IMR-90 (cell line): ENCODE measurements at regions of chr5 and their contacts with region 1.

Region 1: GRCh38 chr5:60677844-60678664 is 21.9 kb downstream of the DEPDC1B start:
- DNase-seq: peak; percentile 58
- ATAC-seq: peak; percentile 68
- H3K4me3 ChIP-seq: no peak overlapping the region
- H3K27ac ChIP-seq: peak overlapping the region; percentile 29; the same call in 1 of the 2 replicates
- H3K4me1 ChIP-seq: peaks cover 6% of the 10 kb centered on the region; the same call in 1 of the 2 replicates
- H3K27me3 ChIP-seq: no peaks in the 10 kb centered on the region
- CTCF ChIP-seq: peak; percentile 63
- POLR2A ChIP-seq: no peak
- RAD21 ChIP-seq: peak; percentile 52

Region 2: GRCh38 chr5:60929024-60929423 is 251.0 kb after region 1 on chr5:
- CTCF ChIA-PET with region 1: no interaction called
- POLR2A ChIA-PET with region 1: no interaction called
- dilution Hi-C with region 1: no loop called
- in situ Hi-C with region 1: no loop called
- intact Hi-C with region 1: loop called (anchors 1 kb)
- DNase-seq: peak; percentile 15
- ATAC-seq: no peak
- H3K4me3 ChIP-seq: no peak overlapping the region
- H3K27ac ChIP-seq: no peak overlapping the region
- H3K4me1 ChIP-seq: no peaks in the 10 kb centered on the region
- H3K27me3 ChIP-seq: no peaks in the 10 kb centered on the region
- CTCF ChIP-seq: peak; percentile 41
- POLR2A ChIP-seq: no peak
- RAD21 ChIP-seq: peak; percentile 40

Region 3: DNA sequence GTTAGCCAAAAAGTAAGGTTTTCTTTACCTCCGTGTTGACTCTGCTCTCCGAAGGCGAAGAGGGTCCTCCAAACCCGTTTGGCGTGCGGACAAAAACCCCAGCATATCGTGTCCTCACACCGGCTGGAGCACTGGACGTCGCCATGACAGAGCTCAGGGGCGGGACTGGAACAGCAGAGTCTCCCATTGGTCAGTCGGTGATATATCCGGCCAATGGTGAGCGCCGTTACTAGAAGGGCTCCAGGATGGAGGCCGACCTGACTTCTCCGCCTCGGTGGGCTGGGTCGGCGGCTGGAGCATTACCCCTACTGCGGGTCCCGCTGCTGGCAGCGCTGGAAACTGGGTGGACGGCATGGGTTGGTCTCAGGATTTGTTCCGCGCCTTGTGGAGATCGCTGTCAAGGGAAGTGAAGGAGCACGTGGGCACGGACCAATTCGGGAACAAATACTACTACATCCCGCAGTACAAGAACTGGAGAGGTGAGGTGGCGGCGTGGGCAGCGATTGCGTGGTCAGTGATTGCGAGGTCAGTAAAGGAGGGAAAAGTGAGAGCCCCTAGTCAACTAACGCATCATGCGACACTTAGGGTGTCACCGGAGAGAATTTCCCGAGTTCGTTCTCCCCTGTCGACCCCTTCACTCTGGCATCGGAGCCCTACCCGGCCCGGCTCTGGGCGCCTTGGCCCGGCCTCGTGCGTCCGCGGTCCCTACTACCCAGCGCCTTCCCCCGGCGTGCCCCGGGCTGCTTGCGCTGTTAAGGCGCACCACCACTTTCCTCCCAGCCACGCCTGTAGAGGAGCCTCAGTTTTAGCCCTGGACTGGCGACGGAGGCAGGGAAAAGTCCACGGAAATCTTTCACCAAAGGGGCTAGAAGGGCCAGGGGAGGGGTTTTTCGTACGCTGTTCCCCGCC is 267.1 kb after region 1 on chr5 and contains the starts of genes ERCC8 and NDUFAF2:
- CTCF ChIA-PET with region 1: no interaction called
- POLR2A ChIA-PET with region 1: no interaction called
- dilution Hi-C with region 1: no loop called
- in situ Hi-C with region 1: no loop called
- intact Hi-C with region 1: loop called (anchors 5 kb)
- DNase-seq: peak; percentile 92
- ATAC-seq: peak; percentile 97
- H3K4me3 ChIP-seq: peak within 1 kb of the TSS; percentile 88
- H3K27ac ChIP-seq: peak within 1 kb of the TSS; percentile 50
- H3K4me1 ChIP-seq: no peaks in the 10 kb centered on the region
- H3K27me3 ChIP-seq: no peaks in the 10 kb centered on the region
- CTCF ChIP-seq: no peak
- POLR2A ChIP-seq: peak; percentile 65; the same call in 1 of the 2 replicates
- RAD21 ChIP-seq: no peak
- total RNA-seq, gene ERCC8: 29.2 and 36.7 TPM in 2 replicates
- total RNA-seq, gene NDUFAF2: 11.8 and 34.2 TPM in 2 replicates

Region 4: GRCh38 chr5:61933787-61934626 is 1256.0 kb after region 1 on chr5:
- CTCF ChIA-PET with region 1: no interaction called
- POLR2A ChIA-PET with region 1: no interaction called
- dilution Hi-C with region 1: no loop called
- in situ Hi-C with region 1: no loop called
- intact Hi-C with region 1: loop called (anchors 1 kb)
- DNase-seq: peak; percentile 29
- ATAC-seq: peak; percentile 57; the same call in 1 of the 2 replicates
- H3K4me3 ChIP-seq: no peak overlapping the region
- H3K27ac ChIP-seq: no peak overlapping the region
- H3K4me1 ChIP-seq: no peaks in the 10 kb centered on the region
- H3K27me3 ChIP-seq: no peaks in the 10 kb centered on the region
- CTCF ChIP-seq: peak; percentile 52
- POLR2A ChIP-seq: no peak
- RAD21 ChIP-seq: peak; percentile 62

Region 5: GRCh38 chr5:62143268-62144229 is 1465.5 kb after region 1 on chr5:
- CTCF ChIA-PET with region 1: no interaction called
- POLR2A ChIA-PET with region 1: no interaction called
- dilution Hi-C with region 1: no loop called
- in situ Hi-C with region 1: no loop called
- intact Hi-C with region 1: loop called (anchors 2 kb)
- DNase-seq: peak; percentile 40
- ATAC-seq: peak; percentile 72
- H3K4me3 ChIP-seq: no peak overlapping the region
- H3K27ac ChIP-seq: no peak overlapping the region
- H3K4me1 ChIP-seq: no peaks in the 10 kb centered on the region
- H3K27me3 ChIP-seq: no peaks in the 10 kb centered on the region; the same call in none of the 2 replicates
- CTCF ChIP-seq: peak; percentile 55
- POLR2A ChIP-seq: no peak
- RAD21 ChIP-seq: peak; percentile 27; the same call in 1 of the 2 replicates